ENCODE measurements at regions of chr11 and their contacts with region 1.

Region 1: GRCh38 chr11:2975594-2975993 is 16.5 kb downstream of the NAP1L4 start:
- DNase-seq: peak; percentile 67
- ATAC-seq: peak; percentile 95
- H3K4me3 Mint-ChIP-seq: no peak overlapping the region
- H3K27ac Mint-ChIP-seq: no peak overlapping the region
- H3K4me1 Mint-ChIP-seq: peaks cover 27% of the 10 kb centered on the region
- H3K27me3 Mint-ChIP-seq: no peaks in the 10 kb centered on the region

Region 2: DNA sequence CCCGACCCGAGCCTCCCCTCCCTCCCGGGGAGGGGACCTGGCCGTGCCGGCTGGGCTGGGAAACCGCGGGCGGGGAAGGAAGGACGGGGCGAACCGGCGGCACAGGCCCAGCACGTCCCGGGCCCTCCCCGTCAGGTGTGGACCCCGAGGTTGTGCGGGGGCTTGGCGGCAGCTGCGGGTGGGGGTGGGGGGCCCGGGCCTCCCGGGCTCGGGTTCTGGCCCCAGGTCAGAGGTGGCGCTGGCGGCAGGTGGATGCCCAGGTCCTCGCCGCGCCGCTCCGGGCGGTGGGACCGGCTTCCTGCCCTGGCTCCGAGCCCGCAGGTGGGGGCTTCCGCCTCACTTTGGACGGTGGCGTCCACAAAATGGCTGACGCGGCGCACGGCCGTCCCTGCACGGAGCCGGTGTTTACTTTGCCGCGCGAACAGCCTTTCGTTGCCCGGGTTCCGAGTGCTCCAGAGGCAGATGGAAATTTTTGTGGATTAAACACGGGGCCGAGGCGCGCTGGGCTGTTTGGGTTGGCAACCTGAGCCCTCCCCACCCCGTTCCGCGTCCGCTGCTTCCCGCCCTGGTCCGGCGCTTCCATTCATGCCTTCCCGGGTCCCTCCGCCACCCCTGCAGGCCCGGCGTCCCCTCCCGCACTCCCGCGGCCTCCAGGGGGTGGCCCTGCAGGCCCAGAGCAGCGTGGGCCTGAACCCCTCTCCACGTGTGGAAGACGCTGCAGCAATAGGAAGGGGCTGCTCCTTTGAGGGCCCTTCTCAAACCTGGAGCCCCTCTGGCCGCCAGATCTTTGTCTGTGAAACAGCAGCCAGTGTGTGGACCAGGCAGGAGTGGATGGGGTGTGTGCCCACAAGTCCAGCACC is 183.8 kb before region 1 on chr11:
- CTCF ChIA-PET with region 1: no interaction called
- POLR2A ChIA-PET with region 1: no interaction called
- intact Hi-C with region 1: no loop called
- DNase-seq: peak; percentile 50
- ATAC-seq: peak; percentile 75
- H3K4me3 Mint-ChIP-seq: peak overlapping the region; percentile 43
- H3K27ac Mint-ChIP-seq: no peak overlapping the region
- H3K4me1 Mint-ChIP-seq: no peaks in the 10 kb centered on the region
- H3K27me3 Mint-ChIP-seq: no peaks in the 10 kb centered on the region

Region 3: GRCh38 chr11:2954263-2954662 is 21.3 kb before region 1 on chr11:
- CTCF ChIA-PET with region 1: interaction called, 10 read pairs
- POLR2A ChIA-PET with region 1: no interaction called
- intact Hi-C with region 1: no loop called
- DNase-seq: no peak
- ATAC-seq: no peak
- H3K4me3 Mint-ChIP-seq: no peak overlapping the region
- H3K27ac Mint-ChIP-seq: no peak overlapping the region
- H3K4me1 Mint-ChIP-seq: peaks cover 19% of the 10 kb centered on the region
- H3K27me3 Mint-ChIP-seq: no peaks in the 10 kb centered on the region

Region 4: GRCh38 chr11:3014057-3014938 is 38.7 kb after region 1 on chr11:
- CTCF ChIA-PET with region 1: interaction called, 8 read pairs
- POLR2A ChIA-PET with region 1: interaction called, 13 read pairs
- intact Hi-C with region 1: no loop called
- DNase-seq: peak; percentile 76
- ATAC-seq: peak; percentile 80
- H3K4me3 Mint-ChIP-seq: peak overlapping the region; percentile 16
- H3K27ac Mint-ChIP-seq: peak overlapping the region; percentile 81
- H3K4me1 Mint-ChIP-seq: peaks cover 38% of the 10 kb centered on the region
- H3K27me3 Mint-ChIP-seq: no peaks in the 10 kb centered on the region

Region 5: DNA sequence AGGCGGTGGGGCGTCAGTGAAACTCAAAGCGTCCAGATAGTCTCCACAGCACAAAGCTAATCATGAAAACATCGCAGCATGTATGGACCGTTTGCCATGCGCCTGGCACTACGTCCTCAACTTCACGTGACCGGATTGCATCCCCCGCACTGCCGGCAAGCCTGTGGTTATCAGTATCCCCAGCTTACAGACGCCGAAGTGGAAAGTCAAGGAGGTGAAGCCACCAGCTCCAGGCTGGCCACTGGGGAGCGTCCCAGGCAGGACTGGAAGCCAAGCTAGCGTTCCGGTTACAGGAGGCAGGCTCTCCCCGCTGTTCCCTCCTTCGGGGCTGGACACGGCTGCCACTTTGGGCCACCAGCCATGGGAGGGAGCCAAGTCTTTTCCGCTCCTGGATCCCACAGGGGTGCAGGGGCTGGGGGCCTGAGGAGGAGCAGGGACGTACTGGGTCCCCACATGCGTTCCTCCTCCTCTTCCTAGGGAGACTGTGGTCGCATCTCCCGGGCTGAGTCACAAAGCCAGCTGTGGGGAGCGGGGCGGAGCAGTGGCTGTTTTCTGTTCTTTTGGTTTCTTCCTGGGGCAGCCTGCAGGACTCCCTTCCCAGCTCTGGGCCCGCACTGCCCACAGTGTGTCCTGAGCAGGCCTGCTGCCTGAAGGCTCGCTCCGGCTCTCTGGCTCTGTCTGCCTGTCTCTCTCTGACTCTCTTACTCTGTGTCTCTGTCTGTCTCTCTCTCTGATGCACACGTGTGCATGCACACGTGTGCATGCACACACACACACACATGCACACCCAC is 193.9 kb after region 1 on chr11:
- CTCF ChIA-PET with region 1: no interaction called
- POLR2A ChIA-PET with region 1: no interaction called
- intact Hi-C with region 1: no loop called
- DNase-seq: peak; percentile 72
- ATAC-seq: peak; percentile 58
- H3K4me3 Mint-ChIP-seq: peak overlapping the region; percentile 58
- H3K27ac Mint-ChIP-seq: peak overlapping the region; percentile 49
- H3K4me1 Mint-ChIP-seq: peaks cover 24% of the 10 kb centered on the region
- H3K27me3 Mint-ChIP-seq: peaks cover 16% of the 10 kb centered on the region

Measured in activated CD4-positive, alpha-beta T cell treated with anti-CD3 and anti-CD28 coated beads for 36 hours (primary cell).